Endothelial cell of umbilical vein (primary cell): ENCODE measurements at regions of chr18 and their contacts with region 1.

Region 1: GRCh38 chr18:56314396-56314795 is 324.0 kb downstream of the TXNL1 start:
- DNase-seq: peak; percentile 26
- H3K4me3 ChIP-seq: no peak overlapping the region
- H3K27ac ChIP-seq: no peak overlapping the region
- H3K4me1 ChIP-seq: no peaks in the 10 kb centered on the region
- H3K27me3 ChIP-seq: no peaks in the 10 kb centered on the region
- CTCF ChIP-seq: no peak
- POLR2A ChIP-seq: no peak

Region 2: DNA sequence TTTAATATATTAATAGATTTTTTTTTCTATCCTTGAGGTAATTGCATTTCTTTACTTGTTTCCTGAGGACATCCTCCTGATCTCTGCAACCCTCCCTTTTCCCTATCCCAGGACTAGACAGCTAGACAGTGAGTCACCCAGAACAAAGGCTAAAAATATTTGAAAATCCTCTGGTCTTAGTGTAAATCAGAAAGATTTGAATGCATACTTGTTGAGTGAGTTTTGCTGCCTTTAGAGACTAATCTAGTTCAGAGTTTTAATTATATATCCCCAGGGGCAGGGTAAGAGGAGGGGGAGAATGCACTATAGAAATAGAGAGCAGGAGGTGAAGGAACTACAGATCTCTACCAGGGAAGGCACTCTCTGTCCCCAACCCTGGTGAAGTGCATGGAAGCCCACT is 524.1 kb before region 1 on chr18:
- CTCF ChIA-PET with region 1: no interaction called
- POLR2A ChIA-PET with region 1: no interaction called
- dilution Hi-C with region 1: no loop called
- intact Hi-C with region 1: loop called (anchors 10 kb)
- DNase-seq: peak; percentile 84
- H3K4me3 ChIP-seq: no peak overlapping the region
- H3K27ac ChIP-seq: peak overlapping the region; percentile 81
- H3K4me1 ChIP-seq: peaks cover 19% of the 10 kb centered on the region
- H3K27me3 ChIP-seq: no peaks in the 10 kb centered on the region
- CTCF ChIP-seq: no peak
- POLR2A ChIP-seq: no peak

Region 3: GRCh38 chr18:56333146-56333545 is 18.8 kb after region 1 on chr18:
- CTCF ChIA-PET with region 1: no interaction called
- POLR2A ChIA-PET with region 1: no interaction called
- dilution Hi-C with region 1: no loop called
- intact Hi-C with region 1: no loop called
- DNase-seq: no peak
- H3K4me3 ChIP-seq: no peak overlapping the region
- H3K27ac ChIP-seq: no peak overlapping the region
- H3K4me1 ChIP-seq: peaks cover 17% of the 10 kb centered on the region
- H3K27me3 ChIP-seq: no peaks in the 10 kb centered on the region
- CTCF ChIP-seq: no peak
- POLR2A ChIP-seq: no peak